ENCODE measurements at regions of chrX and their contacts with region 1.

Region 1: GRCh38 chrX:130575831-130576389 is 174.1 kb downstream of the RBMX2 start:
- DNase-seq: peak; percentile 29 to 65 (median 42)
- ATAC-seq: peak; percentile 88
- H3K4me3 ChIP-seq: no peak overlapping the region
- H3K27ac ChIP-seq: no peak overlapping the region
- H3K4me1 ChIP-seq: no peaks in the 10 kb centered on the region
- H3K27me3 ChIP-seq: no peaks in the 10 kb centered on the region
- CTCF ChIP-seq: peak; percentile 70 to 85 (median 82)
- EP300 ChIP-seq: no peak
- POLR2A ChIP-seq: no peak
- RAD21 ChIP-seq: peak; percentile 63 to 81

Region 2: GRCh38 chrX:130637591-130637990 is 61.7 kb after region 1 on chrX:
- CTCF ChIA-PET with region 1: no interaction called
- POLR2A ChIA-PET with region 1: no interaction called
- in situ Hi-C with region 1: no loop called
- intact Hi-C with region 1: no loop called
- DNase-seq: no peak
- ATAC-seq: no peak
- H3K4me3 ChIP-seq: no peak overlapping the region
- H3K27ac ChIP-seq: no peak overlapping the region
- H3K4me1 ChIP-seq: no peaks in the 10 kb centered on the region
- H3K27me3 ChIP-seq: no peaks in the 10 kb centered on the region
- CTCF ChIP-seq: no peak
- EP300 ChIP-seq: no peak
- POLR2A ChIP-seq: no peak
- RAD21 ChIP-seq: no peak

Region 3: DNA sequence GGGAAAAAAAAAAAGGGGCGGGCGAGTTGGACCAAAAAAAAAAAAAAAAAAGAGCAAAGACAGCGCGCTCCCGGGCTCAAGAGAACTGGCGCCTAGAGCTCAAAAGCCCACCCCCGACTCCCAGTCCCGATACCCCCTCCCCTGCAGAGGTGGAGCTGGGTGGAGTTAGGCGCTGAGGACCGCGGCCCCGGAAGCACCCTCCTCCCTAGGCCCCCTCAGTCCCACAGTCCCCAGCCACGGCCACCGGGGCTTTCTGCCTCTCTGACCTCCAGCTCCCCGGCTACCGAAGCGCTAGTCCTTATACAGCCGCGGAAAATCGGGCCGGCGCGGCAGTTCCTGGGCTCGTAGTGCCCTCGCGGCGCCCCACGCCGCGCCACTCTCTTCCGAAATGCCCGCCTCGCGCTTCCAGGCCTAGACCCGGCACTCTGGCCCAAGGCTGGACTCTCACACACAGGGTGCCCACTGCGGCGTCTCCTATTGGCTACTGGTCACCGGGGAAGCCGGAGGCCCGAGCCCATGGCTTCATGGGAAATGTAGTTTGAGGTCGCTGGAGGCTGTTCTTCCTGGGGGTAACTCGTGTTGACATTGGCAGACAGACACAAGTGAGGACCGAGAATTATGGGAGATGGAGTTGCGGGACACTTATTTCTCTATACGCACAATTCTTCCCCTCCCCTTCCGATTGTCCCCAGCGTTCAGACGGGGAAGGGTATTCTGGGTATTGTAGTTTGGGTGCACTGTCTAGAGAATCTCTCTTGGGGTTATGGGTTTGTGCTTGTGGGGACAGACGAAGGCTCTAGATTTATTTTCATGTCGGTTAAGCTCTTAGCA is 327.1 kb after region 1 on chrX and contains the start of gene ENOX2:
- CTCF ChIA-PET with region 1: no interaction called
- POLR2A ChIA-PET with region 1: no interaction called
- in situ Hi-C with region 1: no loop called
- intact Hi-C with region 1: loop called (anchors 5 kb)
- DNase-seq: peak; percentile 86 to 96 (median 89)
- ATAC-seq: peak; percentile 99
- H3K4me3 ChIP-seq: peak within 1 kb of the TSS; percentile 67
- H3K27ac ChIP-seq: peak within 1 kb of the TSS; percentile 80
- H3K4me1 ChIP-seq: peaks cover 0 to 3% of the 10 kb centered on the region in 2 experiments; a peak in 1 of 5 replicates
- H3K27me3 ChIP-seq: no peaks in the 10 kb centered on the region
- CTCF ChIP-seq: no peak
- EP300 ChIP-seq: no peak
- POLR2A ChIP-seq: peak; percentile 96
- RAD21 ChIP-seq: no peak
- polyA plus RNA-seq, gene ENOX2: 8.4 TPM